Stomach (tissue), 19 donors: ENCODE measurements at regions of chr1 and their contacts with region 1.

Region 1: GRCh38 chr1:227946624-227947385 is 927 bp downstream of the WNT9A start:
- DNase-seq: peak; percentile 88 to 94
- H3K4me3 ChIP-seq: peak overlapping the region; percentile 59 to 72 (median 64)
- H3K27ac ChIP-seq: peak overlapping the region; percentile 74 to 94 (median 81)
- H3K4me1 ChIP-seq: peaks cover 43 to 64% (median 52%) of the 10 kb centered on the region in 4 donors
- H3K27me3 ChIP-seq: peaks cover 0 to 51% (median 24%) of the 10 kb centered on the region in 3 donors
- CTCF ChIP-seq: peak in 5 of 7 experiments; percentile 48 to 80 (median 67)
- EP300 ChIP-seq: no peak
- POLR2A ChIP-seq: no peak

Region 2: DNA sequence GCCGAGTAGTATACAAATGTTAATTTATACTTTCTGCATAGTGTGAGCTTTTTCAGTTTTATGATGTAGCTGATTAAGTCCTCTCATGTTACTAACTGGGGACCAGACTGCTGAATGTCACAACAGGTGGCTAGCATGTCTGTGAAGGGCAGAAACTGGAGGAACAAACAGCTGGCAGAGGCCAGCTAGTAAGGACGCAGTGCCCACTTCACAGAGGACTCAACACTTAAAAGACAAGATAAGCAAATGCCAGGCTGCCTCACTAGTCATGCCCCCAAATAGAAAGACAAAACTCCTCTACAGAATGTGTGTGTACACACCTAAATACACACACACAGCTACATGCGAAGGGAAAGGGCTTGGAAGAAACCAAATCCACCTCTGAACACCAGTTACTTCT is 457.2 kb before region 1 on chr1:
- intact Hi-C with region 1: loop called (anchors 10 kb)
- DNase-seq: no peak
- H3K4me3 ChIP-seq: no peak overlapping the region
- H3K27ac ChIP-seq: no peak overlapping the region
- H3K4me1 ChIP-seq: no peaks in the 10 kb centered on the region
- H3K27me3 ChIP-seq: no peaks in the 10 kb centered on the region
- CTCF ChIP-seq: no peak
- EP300 ChIP-seq: no peak
- POLR2A ChIP-seq: no peak

Region 3: DNA sequence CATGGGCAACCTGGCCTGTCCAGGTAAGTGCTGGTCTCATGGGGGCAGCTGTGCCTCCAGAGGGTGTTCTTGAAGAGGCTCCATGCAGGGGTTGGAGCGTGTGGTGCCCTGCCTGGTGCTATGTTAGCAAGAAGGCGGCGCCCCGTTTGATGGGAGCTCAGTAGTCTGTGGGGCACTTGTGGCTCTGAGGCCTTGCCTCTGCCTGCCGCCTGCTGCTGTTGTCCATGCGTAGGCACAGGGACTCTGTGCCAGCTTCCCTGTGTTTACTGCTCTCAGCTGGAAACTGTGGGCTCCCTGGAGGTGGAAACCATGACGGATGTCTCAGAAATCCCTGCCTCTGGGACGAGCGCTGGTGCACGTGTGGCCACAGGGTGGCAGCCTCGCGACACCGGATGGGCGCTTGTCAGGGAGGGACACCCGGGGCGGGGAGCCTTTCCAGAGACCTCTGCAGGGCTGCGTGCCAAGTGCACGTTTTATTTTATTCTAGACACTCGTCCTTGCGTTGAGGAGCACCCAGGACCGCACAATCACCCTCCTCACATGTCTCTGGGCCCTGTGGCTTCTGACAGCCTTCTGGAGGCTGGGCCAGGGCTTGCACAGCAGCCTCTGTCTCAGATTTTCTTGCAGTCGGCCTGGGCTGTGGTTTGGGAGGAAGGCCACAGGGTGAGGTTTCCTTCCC is 184.4 kb before region 1 on chr1:
- intact Hi-C with region 1: loop called (anchors 5 kb)
- DNase-seq: peak; percentile 88 to 94
- H3K4me3 ChIP-seq: no peak overlapping the region
- H3K27ac ChIP-seq: peak overlapping the region in 2 of 5 donors; percentile 50 to 80
- H3K4me1 ChIP-seq: peaks cover 15 to 74% (median 44%) of the 10 kb centered on the region in 4 donors
- H3K27me3 ChIP-seq: no peaks in the 10 kb centered on the region
- CTCF ChIP-seq: peak in 5 of 7 experiments; percentile 80 to 87 (median 85)
- EP300 ChIP-seq: no peak
- POLR2A ChIP-seq: no peak